Adrenal gland (tissue), 19 donors: ENCODE measurements at regions of chr1 and their contacts with region 1.

Region 1: DNA sequence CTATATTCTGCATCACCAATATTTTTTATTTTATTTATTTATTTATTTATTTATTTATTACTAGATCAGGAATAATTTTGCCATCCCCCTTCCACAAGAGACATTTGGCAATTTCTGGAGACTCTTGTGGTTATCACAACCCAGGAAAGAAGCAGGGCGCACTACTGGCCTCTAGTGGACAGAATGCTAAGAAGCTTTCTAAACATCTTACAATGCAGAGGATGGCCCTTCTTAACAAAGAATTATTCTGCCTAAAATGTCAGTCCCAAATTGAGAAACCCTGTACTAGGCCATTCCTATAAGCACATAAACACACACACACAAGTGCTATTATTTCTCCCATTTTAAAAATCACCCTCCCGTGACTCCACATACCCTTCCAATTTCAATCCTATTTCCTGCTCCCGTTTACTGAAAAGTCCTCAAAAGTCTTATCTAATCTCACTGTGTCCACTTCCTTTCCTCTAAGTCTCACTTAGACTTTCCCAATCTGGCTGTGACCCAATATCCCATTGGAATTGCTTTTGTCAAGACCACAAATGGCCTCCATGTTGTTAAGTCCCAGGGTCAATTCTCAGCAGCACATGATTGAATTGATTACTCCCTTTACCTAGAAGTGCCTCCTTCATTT is 43.7 kb upstream of the RNF11 start:
- DNase-seq: peak; percentile 61 to 87 (median 75)
- H3K4me3 ChIP-seq: no peak overlapping the region
- H3K27ac ChIP-seq: peak overlapping the region in 1 of 5 donors; percentile 18
- H3K4me1 ChIP-seq: no peaks in the 10 kb centered on the region
- H3K27me3 ChIP-seq: no peaks in the 10 kb centered on the region
- CTCF ChIP-seq: peak; percentile 53 to 88 (median 77)
- POLR2A ChIP-seq: no peak

Region 2: DNA sequence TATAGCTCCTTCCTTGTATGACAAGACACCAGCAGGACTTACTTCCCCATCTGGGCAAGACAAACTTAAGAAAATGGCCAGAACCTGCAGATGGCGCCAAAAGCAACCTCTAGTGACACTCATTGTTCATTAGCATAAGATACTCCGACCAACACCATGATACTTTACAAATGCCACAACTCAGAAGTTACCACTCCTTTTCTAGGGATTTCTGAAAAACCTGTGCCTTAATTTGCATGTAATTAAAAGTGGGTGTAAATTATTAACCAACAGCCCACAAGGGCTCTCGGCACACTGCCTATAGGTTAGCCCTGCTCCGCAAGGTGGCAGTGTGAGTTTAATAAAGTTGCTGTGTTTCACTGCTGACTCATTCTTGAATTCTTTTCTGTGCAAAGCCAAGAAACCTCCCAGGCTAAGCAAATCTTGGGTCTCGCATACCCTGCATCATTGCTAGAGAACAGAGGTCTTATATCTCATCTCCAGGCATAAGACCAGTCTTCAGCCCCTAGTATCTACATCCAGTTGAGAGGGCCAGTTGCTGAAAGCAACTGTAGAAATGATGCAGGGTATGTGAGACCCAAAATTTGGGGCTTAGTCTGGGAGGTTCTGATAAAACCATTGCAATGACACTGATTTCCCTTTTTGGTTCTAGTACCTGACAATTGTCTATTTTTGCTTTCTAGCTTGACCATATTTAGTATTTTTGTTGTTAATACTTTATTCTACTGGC is 318.7 kb before region 1 on chr1:
- intact Hi-C with region 1: loop called in 1 of 2 experiments (anchors 10 kb)
- DNase-seq: peak; percentile 53 to 87 (median 60)
- H3K4me3 ChIP-seq: no peak overlapping the region
- H3K27ac ChIP-seq: no peak overlapping the region
- H3K4me1 ChIP-seq: no peaks in the 10 kb centered on the region
- H3K27me3 ChIP-seq: no peaks in the 10 kb centered on the region
- CTCF ChIP-seq: peak; percentile 38 to 65 (median 49)
- POLR2A ChIP-seq: no peak

Region 3: GRCh38 chr1:51264451-51264850 is 72.1 kb after region 1 on chr1:
- intact Hi-C with region 1: no loop called
- DNase-seq: no peak
- H3K4me3 ChIP-seq: no peak overlapping the region
- H3K27ac ChIP-seq: peak overlapping the region in 2 of 5 donors; percentile 26 to 38
- H3K4me1 ChIP-seq: peaks cover 39 to 84% of the 10 kb centered on the region in 2 donors
- H3K27me3 ChIP-seq: no peaks in the 10 kb centered on the region
- CTCF ChIP-seq: no peak
- POLR2A ChIP-seq: no peak